HepG2 (cell line): ENCODE measurements at regions of chr1 and their contacts with region 1.

Region 1: GRCh38 chr1:210400043-210400840 is 71.5 kb downstream of the HHAT start:
- DNase-seq: peak; percentile 65
- ATAC-seq: peak; percentile 99
- H3K4me3 ChIP-seq: no peak overlapping the region
- H3K27ac ChIP-seq: no peak overlapping the region
- H3K4me1 ChIP-seq: peaks cover 7% of the 10 kb centered on the region
- H3K27me3 ChIP-seq: no peaks in the 10 kb centered on the region
- CTCF ChIP-seq: peak; percentile 91
- EP300 ChIP-seq: no peak
- POLR2A ChIP-seq: no peak
- RAD21 ChIP-seq: peak; percentile 90

Region 2: GRCh38 chr1:210099921-210100320 is 300.3 kb before region 1 on chr1:
- CTCF ChIA-PET with region 1: no interaction called
- POLR2A ChIA-PET with region 1: no interaction called
- in situ Hi-C with region 1: no loop called
- intact Hi-C with region 1: no loop called
- DNase-seq: no peak
- ATAC-seq: no peak
- H3K4me3 ChIP-seq: no peak overlapping the region
- H3K27ac ChIP-seq: no peak overlapping the region
- H3K4me1 ChIP-seq: no peaks in the 10 kb centered on the region
- H3K27me3 ChIP-seq: no peaks in the 10 kb centered on the region
- CTCF ChIP-seq: no peak
- EP300 ChIP-seq: no peak
- POLR2A ChIP-seq: no peak
- RAD21 ChIP-seq: no peak

Region 3: DNA sequence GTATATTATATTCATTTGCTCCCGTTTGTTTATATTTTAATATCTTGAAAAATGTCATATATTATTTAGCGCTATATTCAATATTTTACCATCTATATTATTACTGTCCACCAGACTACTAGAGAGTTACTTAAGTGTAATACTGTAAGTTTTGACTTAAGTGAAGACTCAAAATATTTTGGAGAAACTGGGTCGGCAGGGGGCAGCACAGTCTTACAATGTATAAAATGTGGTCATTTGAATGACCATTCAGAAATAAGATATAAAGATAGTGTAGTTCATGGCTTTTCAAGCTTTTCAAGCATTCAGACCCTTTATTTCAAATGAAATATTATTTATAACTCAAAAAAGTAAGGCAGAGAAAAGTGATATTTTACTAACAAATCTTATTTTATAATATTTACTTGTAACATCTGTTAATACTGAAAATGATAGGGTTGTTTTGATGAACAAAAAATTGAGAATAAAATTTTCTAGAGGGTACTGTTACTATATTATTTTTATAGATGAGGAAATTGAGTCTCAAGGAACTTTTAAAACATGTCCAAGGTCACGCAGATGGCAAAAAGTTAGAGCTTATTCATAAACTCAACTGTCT is 256.7 kb before region 1 on chr1:
- CTCF ChIA-PET with region 1: no interaction called
- POLR2A ChIA-PET with region 1: no interaction called
- in situ Hi-C with region 1: no loop called
- intact Hi-C with region 1: loop called (anchors 1 kb)
- DNase-seq: peak; percentile 29
- ATAC-seq: no peak
- H3K4me3 ChIP-seq: no peak overlapping the region
- H3K27ac ChIP-seq: no peak overlapping the region
- H3K4me1 ChIP-seq: no peaks in the 10 kb centered on the region
- H3K27me3 ChIP-seq: no peaks in the 10 kb centered on the region
- CTCF ChIP-seq: peak; percentile 61
- EP300 ChIP-seq: no peak
- POLR2A ChIP-seq: no peak
- RAD21 ChIP-seq: no peak

Region 4: GRCh38 chr1:210360852-210361477 is 39.3 kb before region 1 on chr1:
- CTCF ChIA-PET with region 1: interaction called, 67 read pairs
- POLR2A ChIA-PET with region 1: no interaction called
- in situ Hi-C with region 1: loop called (anchors 5 kb)
- intact Hi-C with region 1: loop called (anchors 1 kb)
- DNase-seq: peak; percentile 52
- ATAC-seq: peak; percentile 93
- H3K4me3 ChIP-seq: peak overlapping the region; percentile 3 to 35 (median 8); a peak in 3 of 6 replicates
- H3K27ac ChIP-seq: no peak overlapping the region
- H3K4me1 ChIP-seq: peaks cover 38% of the 10 kb centered on the region
- H3K27me3 ChIP-seq: no peaks in the 10 kb centered on the region
- CTCF ChIP-seq: peak; percentile 70
- EP300 ChIP-seq: no peak
- POLR2A ChIP-seq: no peak
- RAD21 ChIP-seq: peak; percentile 42; the same call in 1 of the 2 replicates

Region 5: DNA sequence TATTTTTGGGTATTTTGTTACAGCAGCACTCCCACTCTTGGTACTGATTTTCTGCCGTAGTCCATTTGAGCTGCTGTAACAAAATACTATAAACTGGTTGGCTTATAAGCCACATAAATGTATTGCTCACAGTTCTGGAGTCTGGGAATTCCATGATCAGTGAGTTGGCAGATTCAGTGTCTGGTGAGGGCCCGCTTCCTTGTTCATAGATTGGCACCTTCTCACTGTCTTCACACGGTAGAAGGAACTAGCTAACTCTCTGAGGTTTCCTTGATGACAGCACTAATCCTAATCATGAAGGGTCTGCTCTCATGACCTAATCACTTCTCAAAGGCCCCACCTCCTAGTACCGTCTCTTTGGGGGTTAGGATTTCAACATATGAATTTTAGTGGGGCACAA is 13.7 kb after region 1 on chr1:
- CTCF ChIA-PET with region 1: no interaction called
- POLR2A ChIA-PET with region 1: no interaction called
- in situ Hi-C with region 1: no loop called
- intact Hi-C with region 1: no loop called
- DNase-seq: no peak
- ATAC-seq: no peak
- H3K4me3 ChIP-seq: no peak overlapping the region
- H3K27ac ChIP-seq: no peak overlapping the region
- H3K4me1 ChIP-seq: no peaks in the 10 kb centered on the region
- H3K27me3 ChIP-seq: no peaks in the 10 kb centered on the region
- CTCF ChIP-seq: no peak
- EP300 ChIP-seq: no peak
- POLR2A ChIP-seq: no peak
- RAD21 ChIP-seq: no peak

Region 6: GRCh38 chr1:210464519-210465039 is 64.3 kb after region 1 on chr1:
- CTCF ChIA-PET with region 1: no interaction called
- POLR2A ChIA-PET with region 1: no interaction called
- in situ Hi-C with region 1: no loop called
- intact Hi-C with region 1: no loop called
- DNase-seq: no peak
- ATAC-seq: no peak
- H3K4me3 ChIP-seq: no peak overlapping the region
- H3K27ac ChIP-seq: no peak overlapping the region
- H3K4me1 ChIP-seq: no peaks in the 10 kb centered on the region
- H3K27me3 ChIP-seq: no peaks in the 10 kb centered on the region
- CTCF ChIP-seq: no peak
- EP300 ChIP-seq: no peak
- POLR2A ChIP-seq: no peak
- RAD21 ChIP-seq: no peak

Region 7: DNA sequence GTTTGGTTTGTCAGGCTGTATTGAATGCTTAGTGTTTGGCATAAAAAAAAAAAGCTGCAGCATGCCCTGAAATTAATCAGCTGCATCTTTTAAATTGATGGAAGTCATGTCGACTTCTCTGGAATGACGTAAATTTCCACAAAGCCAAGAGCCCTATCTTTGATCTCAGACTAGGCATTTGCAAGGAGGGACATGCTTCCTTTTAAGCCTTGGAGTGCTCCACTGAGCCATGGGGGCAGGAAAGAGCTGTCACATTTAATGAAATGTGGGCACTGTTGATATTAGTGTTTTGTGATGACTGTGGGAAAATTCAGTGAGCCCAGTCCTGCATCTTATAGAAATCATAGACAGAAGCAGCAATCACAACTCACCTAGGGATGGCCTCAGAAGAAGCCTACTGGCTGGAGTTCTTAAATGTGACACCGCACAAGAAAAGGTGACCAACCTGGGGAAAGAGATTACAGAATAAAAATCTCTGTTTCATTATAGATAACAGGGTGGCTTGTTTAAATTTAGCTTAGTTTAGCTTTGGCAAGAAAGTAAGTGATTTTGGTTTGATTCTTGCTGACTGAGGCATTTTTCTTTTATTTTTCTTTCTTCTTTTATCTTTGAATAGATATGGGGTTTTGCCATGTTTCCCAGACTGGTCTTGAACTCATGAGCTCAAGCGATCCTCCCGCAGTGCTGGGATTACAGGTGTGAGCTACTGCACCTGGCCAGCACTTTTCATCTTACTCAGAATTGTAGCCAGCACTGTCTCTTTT is 116.6 kb after region 1 on chr1:
- CTCF ChIA-PET with region 1: no interaction called
- POLR2A ChIA-PET with region 1: no interaction called
- in situ Hi-C with region 1: no loop called
- intact Hi-C with region 1: no loop called
- DNase-seq: no peak
- ATAC-seq: no peak
- H3K4me3 ChIP-seq: no peak overlapping the region
- H3K27ac ChIP-seq: no peak overlapping the region
- H3K4me1 ChIP-seq: no peaks in the 10 kb centered on the region
- H3K27me3 ChIP-seq: no peaks in the 10 kb centered on the region
- CTCF ChIP-seq: no peak
- EP300 ChIP-seq: no peak
- POLR2A ChIP-seq: no peak
- RAD21 ChIP-seq: no peak